Panc1 (cell line): ENCODE measurements at regions of chr17 and their contacts with region 1.

Region 1: GRCh38 chr17:17343160-17343735 is 40.1 kb downstream of the NT5M start:
- DNase-seq: no peak
- ATAC-seq: no peak
- H3K4me3 ChIP-seq: no peak overlapping the region
- H3K27ac ChIP-seq: no peak overlapping the region
- H3K4me1 ChIP-seq: no peaks in the 10 kb centered on the region
- H3K27me3 ChIP-seq: no peaks in the 10 kb centered on the region
- CTCF ChIP-seq: no peak

Region 2: DNA sequence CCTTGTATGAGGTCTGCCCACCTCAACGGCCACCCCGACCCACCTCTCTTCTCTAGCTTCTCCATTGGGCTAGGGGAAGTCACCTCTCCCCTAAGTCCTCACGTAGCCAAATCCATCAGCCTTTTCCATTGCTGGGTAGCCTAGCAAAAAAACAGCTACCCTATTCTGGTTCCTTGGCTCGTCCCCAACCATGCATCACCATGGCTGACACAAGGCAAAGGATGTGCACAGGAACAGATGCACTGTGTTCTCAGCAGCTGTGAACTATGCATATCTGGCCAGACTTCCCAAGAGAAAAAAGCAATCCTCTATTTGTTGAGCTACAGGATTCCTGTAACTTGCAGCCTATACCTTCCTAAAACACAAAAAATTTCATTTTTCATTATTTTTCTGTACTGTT is 84.2 kb before region 1 on chr17:
- CTCF ChIA-PET with region 1: no interaction called
- POLR2A ChIA-PET with region 1: no interaction called
- in situ Hi-C with region 1: no loop called
- intact Hi-C with region 1: no loop called
- DNase-seq: no peak
- ATAC-seq: no peak
- H3K4me3 ChIP-seq: no peak overlapping the region
- H3K27ac ChIP-seq: no peak overlapping the region
- H3K4me1 ChIP-seq: no peaks in the 10 kb centered on the region
- H3K27me3 ChIP-seq: no peaks in the 10 kb centered on the region
- CTCF ChIP-seq: no peak

Region 3: DNA sequence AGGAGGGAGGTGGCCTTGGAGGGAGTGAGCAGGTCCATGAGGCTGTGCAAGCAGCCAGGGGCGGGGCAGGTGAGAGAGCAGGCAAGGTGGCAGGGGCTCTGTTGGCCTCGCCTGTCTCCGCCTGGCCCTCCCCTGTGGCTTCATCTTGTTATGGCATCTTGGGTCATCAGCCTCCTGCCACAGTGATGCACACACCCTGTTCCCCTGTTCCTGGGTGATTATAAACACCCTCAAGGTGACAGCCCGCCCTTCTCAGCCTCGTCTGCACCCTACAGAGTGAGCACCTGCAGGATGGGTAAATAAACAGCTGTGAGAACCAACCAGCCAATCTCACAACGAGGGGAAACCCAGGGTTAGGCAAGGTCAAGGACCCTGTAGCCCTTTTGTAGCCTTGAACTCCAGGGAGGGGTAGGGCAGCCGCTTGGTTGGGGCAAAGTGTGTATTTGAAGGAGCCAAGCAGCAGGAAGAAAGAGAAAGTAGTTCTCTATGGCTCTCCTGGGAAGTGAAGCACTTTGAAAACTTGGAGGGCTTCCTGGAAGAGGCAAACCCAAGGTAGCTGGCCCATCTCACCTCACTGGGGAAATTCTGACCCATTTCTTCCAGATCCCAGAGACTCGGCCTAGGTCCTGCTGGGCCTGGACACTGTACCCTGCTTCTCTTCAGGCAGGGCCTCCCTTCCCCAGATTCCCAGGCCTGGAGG is 20.5 kb after region 1 on chr17:
- CTCF ChIA-PET with region 1: no interaction called
- POLR2A ChIA-PET with region 1: no interaction called
- in situ Hi-C with region 1: no loop called
- intact Hi-C with region 1: no loop called
- DNase-seq: no peak
- ATAC-seq: no peak
- H3K4me3 ChIP-seq: no peak overlapping the region
- H3K27ac ChIP-seq: no peak overlapping the region
- H3K4me1 ChIP-seq: no peaks in the 10 kb centered on the region
- H3K27me3 ChIP-seq: no peaks in the 10 kb centered on the region
- CTCF ChIP-seq: no peak

Region 4: DNA sequence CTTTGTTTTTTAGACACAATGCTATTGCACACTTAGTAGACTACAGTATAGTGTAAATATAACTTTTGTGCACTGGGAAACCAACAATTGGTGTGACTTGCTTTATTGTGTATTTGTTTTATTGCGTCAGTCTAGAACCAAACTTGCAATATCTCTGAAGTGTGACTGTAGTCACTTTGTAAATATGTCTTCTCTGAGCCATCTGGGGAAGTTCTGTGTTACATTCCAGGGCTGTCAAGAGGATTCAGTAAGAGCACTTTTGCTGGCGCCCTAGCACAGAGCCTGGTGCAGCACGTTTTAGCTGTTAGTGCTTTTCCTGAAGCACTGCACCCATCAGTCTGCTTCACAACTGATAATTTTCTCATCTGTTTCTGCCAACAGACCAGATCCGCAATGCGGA is 33.1 kb after region 1 on chr17:
- CTCF ChIA-PET with region 1: no interaction called
- POLR2A ChIA-PET with region 1: no interaction called
- in situ Hi-C with region 1: no loop called
- intact Hi-C with region 1: no loop called
- DNase-seq: peak; percentile 55
- ATAC-seq: no peak
- H3K4me3 ChIP-seq: no peak overlapping the region
- H3K27ac ChIP-seq: no peak overlapping the region
- H3K4me1 ChIP-seq: no peaks in the 10 kb centered on the region
- H3K27me3 ChIP-seq: no peaks in the 10 kb centered on the region
- CTCF ChIP-seq: no peak

Region 5: GRCh38 chr17:17476865-17477467 is 133.7 kb after region 1 on chr17 and contains the start of gene MED9:
- CTCF ChIA-PET with region 1: interaction called, 10 read pairs
- POLR2A ChIA-PET with region 1: no interaction called
- in situ Hi-C with region 1: no loop called
- intact Hi-C with region 1: no loop called
- DNase-seq: peak; percentile 48
- ATAC-seq: peak; percentile 97
- H3K4me3 ChIP-seq: peak within 1 kb of the TSS; percentile 86 to 94
- H3K27ac ChIP-seq: peak within 1 kb of the TSS; percentile 79
- H3K4me1 ChIP-seq: peaks cover 4% of the 10 kb centered on the region; the same call in 1 of the 2 replicates
- H3K27me3 ChIP-seq: no peaks in the 10 kb centered on the region; the same call in 1 of the 2 replicates
- CTCF ChIP-seq: no peak
- total RNA-seq, gene MED9: 11.1 TPM